Spleen (tissue), 13 donors: ENCODE measurements at regions of chr16 and their contacts with region 1.

Region 1: DNA sequence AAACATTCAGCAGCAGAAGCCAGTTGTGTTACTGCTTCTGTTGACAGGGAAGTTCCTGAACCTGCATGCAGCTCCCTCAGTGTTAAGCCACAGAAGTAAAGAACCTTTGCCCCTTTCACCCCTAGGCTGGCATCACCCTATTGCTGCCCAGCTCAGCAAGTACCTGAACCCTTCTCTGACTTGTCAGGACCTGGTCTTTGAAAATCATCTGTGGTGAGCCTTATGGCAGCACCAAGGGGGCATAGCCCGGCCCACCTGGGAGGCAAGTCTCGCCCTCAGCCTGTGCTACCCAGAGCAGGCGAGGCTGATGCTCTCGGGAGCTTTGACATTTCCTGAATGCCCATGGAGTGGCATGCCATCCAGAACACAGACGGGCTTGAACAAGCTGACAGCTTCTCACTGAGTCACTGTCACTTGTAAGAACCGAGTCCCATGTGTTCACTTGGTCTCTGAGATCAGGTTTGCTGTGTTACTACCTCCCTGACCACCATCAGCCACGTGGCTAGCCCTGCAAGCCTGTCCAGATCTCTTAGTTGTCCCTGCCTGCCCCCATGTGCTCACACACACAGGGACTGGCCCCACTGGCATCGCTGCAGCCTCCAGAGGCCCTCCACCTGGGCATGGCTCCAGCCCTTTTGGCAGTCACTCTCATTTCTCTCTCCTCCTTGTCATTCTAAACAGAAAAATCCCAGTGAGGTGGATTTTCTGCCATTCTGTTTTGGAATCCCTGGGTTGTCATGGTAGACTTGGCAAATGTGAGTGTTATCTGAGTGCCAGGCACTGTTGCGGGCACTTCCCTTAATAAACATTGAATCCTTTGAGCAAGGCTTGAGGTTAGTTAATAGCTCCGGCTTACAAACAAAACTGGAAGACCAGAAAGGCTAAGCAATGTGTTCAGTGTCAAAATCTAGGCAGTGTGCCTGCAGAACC is 2.9 kb upstream of the CARMIL2 start:
- DNase-seq: no peak
- H3K4me3 ChIP-seq: no peak overlapping the region
- H3K27ac ChIP-seq: no peak overlapping the region
- H3K4me1 ChIP-seq: peaks cover 8 to 33% (median 25%) of the 10 kb centered on the region in 6 donors
- H3K27me3 ChIP-seq: peaks cover 0 to 23% (median 4%) of the 10 kb centered on the region in 7 donors
- CTCF ChIP-seq: no peak
- POLR2A ChIP-seq: no peak

Region 2: DNA sequence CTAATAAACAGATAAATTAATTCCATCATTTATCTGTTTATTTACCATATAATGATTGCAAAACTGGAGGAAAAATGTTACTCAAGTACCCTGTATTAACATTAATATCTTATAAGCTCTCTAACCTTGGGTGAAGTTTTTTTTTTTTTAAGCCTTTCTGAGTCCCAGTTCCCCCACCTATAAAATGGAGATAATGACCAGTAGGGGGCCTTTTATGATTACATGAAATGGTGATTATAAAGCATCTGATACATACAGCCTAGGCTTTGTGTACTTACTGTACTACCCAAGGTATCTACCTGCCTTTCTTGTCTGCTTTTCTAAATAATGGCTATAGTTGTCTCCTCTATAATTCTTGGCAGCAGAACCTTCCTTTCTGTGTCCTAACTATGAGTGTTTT is 292.9 kb before region 1 on chr16:
- intact Hi-C with region 1: no loop called
- DNase-seq: no peak
- H3K4me3 ChIP-seq: no peak overlapping the region
- H3K27ac ChIP-seq: no peak overlapping the region
- H3K4me1 ChIP-seq: peaks cover 0 to under 1% (median 0%) of the 10 kb centered on the region in 6 donors
- H3K27me3 ChIP-seq: no peaks in the 10 kb centered on the region
- CTCF ChIP-seq: peak; percentile 11 to 68 (median 53)
- POLR2A ChIP-seq: no peak

Region 3: DNA sequence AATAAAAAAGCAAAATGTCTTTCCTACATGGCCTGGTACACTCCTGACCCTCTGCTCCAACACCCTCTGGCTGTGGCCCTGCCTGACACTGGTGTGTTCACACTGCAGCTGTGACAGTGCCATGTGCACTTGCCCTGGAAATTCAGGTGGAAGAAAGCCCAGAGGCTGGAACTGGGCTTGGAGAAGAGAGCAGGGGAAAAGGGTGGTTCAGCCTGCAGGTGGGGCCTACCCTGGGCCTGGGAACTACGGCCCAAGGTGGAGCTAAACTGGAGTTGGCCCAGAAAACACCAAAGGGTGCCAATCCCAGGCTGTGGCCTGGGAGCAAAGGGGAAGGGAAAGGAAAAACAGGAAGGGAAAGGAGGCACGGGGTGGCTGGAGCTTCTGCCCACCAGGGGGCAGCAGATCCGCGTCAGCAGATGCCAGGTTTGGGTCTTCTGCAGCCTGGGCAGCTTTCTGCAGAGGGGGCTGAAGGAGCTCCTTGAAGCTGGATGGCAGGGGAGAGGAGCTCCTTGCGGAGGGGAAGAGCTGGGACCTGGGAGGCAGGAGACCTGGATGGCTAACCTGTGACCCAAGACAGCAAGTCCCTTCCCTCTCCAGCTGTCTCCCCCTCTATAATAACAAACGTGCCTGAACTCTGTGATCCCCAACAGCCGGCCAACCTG is 95.2 kb before region 1 on chr16:
- intact Hi-C with region 1: loop called (anchors 5 kb)
- DNase-seq: peak; percentile 93
- H3K4me3 ChIP-seq: peak overlapping the region in 3 of 8 donors; percentile 15 to 50 (median 26)
- H3K27ac ChIP-seq: peak overlapping the region; percentile 48 to 96 (median 81)
- H3K4me1 ChIP-seq: peaks cover 49 to 100% (median 81%) of the 10 kb centered on the region in 6 donors
- H3K27me3 ChIP-seq: no peaks in the 10 kb centered on the region
- CTCF ChIP-seq: peak; percentile 85 to 97 (median 96)
- POLR2A ChIP-seq: no peak

Region 4: DNA sequence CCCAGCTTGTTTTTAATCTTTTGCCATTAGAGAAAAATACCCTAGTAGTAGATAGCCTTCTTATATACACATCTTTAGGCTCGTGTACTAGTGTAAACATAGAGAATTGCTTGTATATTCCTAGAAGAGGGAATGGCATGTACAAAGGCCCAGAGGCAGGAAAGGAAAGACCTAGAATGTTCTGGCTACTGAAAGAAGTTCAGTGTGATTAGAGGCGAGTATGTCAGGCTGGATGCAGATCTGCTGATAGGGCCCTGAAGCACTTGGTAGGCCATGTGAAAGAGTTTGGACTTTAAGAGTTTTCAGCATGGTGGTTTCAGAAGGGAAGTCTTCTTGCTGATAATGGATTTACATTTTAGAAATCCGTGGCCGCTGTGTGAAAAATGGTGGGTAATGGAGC is 62.4 kb before region 1 on chr16:
- intact Hi-C with region 1: no loop called
- DNase-seq: no peak
- H3K4me3 ChIP-seq: no peak overlapping the region
- H3K27ac ChIP-seq: peak overlapping the region in 1 of 8 donors; percentile 15
- H3K4me1 ChIP-seq: peaks cover 0 to 58% (median 6%) of the 10 kb centered on the region in 6 donors
- H3K27me3 ChIP-seq: no peaks in the 10 kb centered on the region
- CTCF ChIP-seq: no peak
- POLR2A ChIP-seq: no peak